G401 (cell line): ENCODE measurements at regions of chr5 and their contacts with region 1.

Region 1: DNA sequence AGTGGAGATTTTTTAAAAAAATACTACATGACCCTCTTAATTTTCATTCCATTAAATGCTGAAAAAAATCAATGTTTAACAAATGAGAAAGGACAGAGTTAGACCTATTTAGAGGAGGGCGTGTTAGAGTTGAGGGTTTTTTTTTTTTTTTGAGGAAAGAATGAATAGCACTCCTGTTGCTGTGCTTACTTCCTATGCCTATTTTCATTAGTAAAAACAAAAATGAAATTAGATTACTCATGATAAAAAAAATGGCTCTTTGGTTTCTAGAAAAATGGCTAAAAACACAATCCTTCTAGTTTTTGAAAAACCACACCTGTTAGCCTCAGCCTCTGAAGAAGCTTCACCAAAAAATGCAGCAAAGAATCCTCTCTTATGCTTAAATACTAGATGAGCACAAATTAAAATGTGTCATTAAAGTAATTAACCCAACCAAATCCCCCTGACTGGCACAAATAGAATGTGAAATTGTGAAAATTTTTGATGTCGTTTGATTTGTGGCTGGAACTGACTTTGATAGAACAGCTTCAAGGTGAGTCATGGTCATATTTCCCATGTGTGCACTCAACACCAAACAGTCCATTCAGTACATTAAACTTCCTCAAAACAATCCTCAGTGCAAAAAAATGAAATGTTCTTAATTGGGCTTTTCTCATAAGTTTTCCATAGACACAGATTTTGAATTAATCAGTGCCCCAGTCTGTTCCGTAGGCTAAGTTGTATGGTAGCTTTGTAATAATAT is 98.0 kb downstream of the MACIR start:
- DNase-seq: no peak

Region 2: GRCh38 chr5:103402851-103403250 is 46.3 kb after region 1 on chr5:
- in situ Hi-C with region 1: loop called (anchors 5 kb)
- DNase-seq: no peak